K562 (cell line): ENCODE measurements at regions of chr10 and their contacts with region 1.

Region 1: GRCh38 chr10:98309366-98310355 is 41.7 kb upstream of the LOXL4 start:
- DNase-seq: peak; percentile 48 to 69 (median 56)
- ATAC-seq: peak; percentile 97
- H3K4me3 ChIP-seq: no peak overlapping the region
- H3K27ac ChIP-seq: no peak overlapping the region
- H3K4me1 ChIP-seq: no peaks in the 10 kb centered on the region; a peak in 2 of 5 replicates
- H3K27me3 ChIP-seq: peaks cover 2 to 35% of the 10 kb centered on the region in 2 experiments; a peak in 2 of 5 replicates
- CTCF ChIP-seq: peak; percentile 73 to 74 (median 74)
- EP300 ChIP-seq: no peak
- POLR2A ChIP-seq: no peak
- RAD21 ChIP-seq: peak; percentile 77 to 81

Region 2: DNA sequence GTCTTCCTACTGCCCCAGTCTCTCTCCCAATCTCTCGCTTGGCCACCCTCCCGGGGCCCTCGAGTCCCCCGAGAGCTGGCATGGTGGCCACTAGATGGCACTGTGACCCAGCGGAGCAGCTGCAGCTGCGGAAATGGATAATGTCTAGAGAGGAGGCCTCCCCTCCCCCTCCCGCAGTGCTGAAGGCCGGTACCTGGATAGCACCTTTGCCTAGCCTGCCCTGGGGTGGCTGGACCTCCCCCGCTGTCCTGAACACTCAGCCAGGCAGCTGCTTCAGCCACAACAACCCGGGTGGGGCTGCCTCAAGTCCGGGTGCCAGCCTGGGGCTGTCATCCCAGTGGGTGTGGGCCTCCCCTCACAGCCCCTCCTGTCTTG is 394.8 kb before region 1 on chr10:
- CTCF ChIA-PET with region 1: no interaction called
- POLR2A ChIA-PET with region 1: no interaction called
- in situ Hi-C with region 1: loop called (anchors 25 kb)
- intact Hi-C with region 1: loop called (anchors 10 kb)
- DNase-seq: peak; percentile 76 to 81 (median 78)
- ATAC-seq: peak; percentile 99
- H3K4me3 ChIP-seq: no peak overlapping the region
- H3K27ac ChIP-seq: no peak overlapping the region
- H3K4me1 ChIP-seq: peaks cover 0 to 8% of the 10 kb centered on the region in 2 experiments; a peak in 2 of 5 replicates
- H3K27me3 ChIP-seq: peaks cover 0 to 18% of the 10 kb centered on the region in 2 experiments; a peak in 2 of 5 replicates
- CTCF ChIP-seq: peak; percentile 77 to 88 (median 85)
- EP300 ChIP-seq: no peak
- POLR2A ChIP-seq: no peak
- RAD21 ChIP-seq: peak; percentile 79 to 89

Region 3: GRCh38 chr10:98170249-98171117 is 139.2 kb before region 1 on chr10:
- CTCF ChIA-PET with region 1: interaction called, 5 read pairs
- POLR2A ChIA-PET with region 1: interaction called, 8 read pairs
- in situ Hi-C with region 1: loop called (anchors 5 kb)
- intact Hi-C with region 1: loop called (anchors 1 kb)
- DNase-seq: peak; percentile 35 to 65 (median 46)
- ATAC-seq: peak; percentile 90
- H3K4me3 ChIP-seq: no peak overlapping the region
- H3K27ac ChIP-seq: no peak overlapping the region
- H3K4me1 ChIP-seq: peaks cover 0 to 2% of the 10 kb centered on the region in 2 experiments; a peak in 2 of 5 replicates
- H3K27me3 ChIP-seq: no peaks in the 10 kb centered on the region
- CTCF ChIP-seq: peak; percentile 58 to 66 (median 65)
- EP300 ChIP-seq: no peak
- POLR2A ChIP-seq: no peak
- RAD21 ChIP-seq: peak; percentile 63 to 77

Region 4: DNA sequence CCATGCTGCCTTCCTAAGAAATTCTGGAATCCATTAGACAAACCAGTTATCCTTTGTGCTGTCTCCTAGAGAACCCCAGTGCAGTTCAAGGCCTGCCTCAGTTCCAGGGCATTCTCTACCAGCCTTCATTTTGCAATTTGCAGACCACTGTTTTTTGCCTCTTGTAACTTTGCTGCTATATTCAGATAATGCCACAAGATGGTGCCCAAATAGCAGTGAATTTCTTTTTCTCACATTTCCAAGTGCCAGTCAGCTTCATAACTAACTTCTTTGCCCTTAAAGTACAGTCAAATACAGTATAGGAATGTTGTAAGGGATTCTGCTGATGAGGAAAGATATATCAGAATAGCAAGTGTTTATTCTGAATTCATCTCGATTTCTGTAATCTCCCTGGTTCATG is 66.8 kb before region 1 on chr10:
- CTCF ChIA-PET with region 1: interaction called, 3 read pairs
- POLR2A ChIA-PET with region 1: no interaction called
- in situ Hi-C with region 1: no loop called
- intact Hi-C with region 1: loop called (anchors 5 kb)
- DNase-seq: no peak
- ATAC-seq: no peak
- H3K4me3 ChIP-seq: no peak overlapping the region
- H3K27ac ChIP-seq: no peak overlapping the region
- H3K4me1 ChIP-seq: peaks cover 0 to 12% of the 10 kb centered on the region in 2 experiments; a peak in 3 of 5 replicates
- H3K27me3 ChIP-seq: no peaks in the 10 kb centered on the region
- CTCF ChIP-seq: peak in 2 of 3 experiments; percentile 18 to 35; a peak in 2 of 6 replicates
- EP300 ChIP-seq: no peak
- POLR2A ChIP-seq: no peak
- RAD21 ChIP-seq: peak; percentile 40 to 60; a peak in 3 of 4 replicates